Dendritic cell treated with granulocyte-macrophage colony-stimulating factor and Interleukin-4, amounts not matched to agents 40 ng/mL and 50 ng/mL, for 4 days (primary cell): ENCODE measurements at regions of chr13 and their contacts with region 1.

Region 1: DNA sequence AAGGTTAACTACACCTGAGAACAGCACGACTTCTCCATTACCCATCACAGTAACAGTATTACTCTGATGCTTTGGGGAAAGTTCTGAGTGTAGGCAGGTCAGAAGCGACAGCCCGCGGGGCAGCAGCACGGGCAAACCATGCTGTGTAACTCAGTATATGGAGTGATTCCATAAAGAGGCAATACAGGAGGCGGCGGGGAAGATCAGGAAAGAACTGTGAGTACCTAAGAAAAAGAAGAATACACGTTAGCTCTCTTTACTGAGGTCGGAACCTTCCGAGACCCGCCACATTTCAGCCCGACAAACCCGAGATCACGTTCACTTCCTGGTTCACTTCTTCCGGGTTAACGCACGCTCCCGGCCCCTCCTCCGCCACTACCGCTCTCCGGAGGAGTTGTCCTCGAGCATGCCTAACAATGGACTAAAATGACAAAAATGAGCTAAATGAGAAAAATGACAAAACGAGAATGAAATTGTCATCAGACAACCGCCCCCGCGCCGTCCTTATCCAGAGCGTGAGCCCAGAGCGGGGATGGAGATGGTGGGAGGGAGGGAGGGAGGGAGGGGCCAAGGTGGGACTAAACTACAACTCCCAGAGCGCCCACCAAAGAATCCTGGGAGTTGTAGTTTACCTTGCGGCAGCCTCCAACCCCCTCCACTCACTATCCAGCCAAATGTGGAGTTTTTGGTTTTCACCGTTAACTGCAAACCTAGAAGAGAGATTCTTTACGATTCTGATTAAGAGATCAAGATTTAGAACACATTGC is at the start of gene MTRF1:
- H3K4me3 Mint-ChIP-seq: peak within 1 kb of the TSS; percentile 99
- H3K27ac Mint-ChIP-seq: peak within 1 kb of the TSS; percentile 93
- H3K4me1 Mint-ChIP-seq: peaks cover 6% of the 10 kb centered on the region
- H3K27me3 Mint-ChIP-seq: no peaks in the 10 kb centered on the region

Region 2: DNA sequence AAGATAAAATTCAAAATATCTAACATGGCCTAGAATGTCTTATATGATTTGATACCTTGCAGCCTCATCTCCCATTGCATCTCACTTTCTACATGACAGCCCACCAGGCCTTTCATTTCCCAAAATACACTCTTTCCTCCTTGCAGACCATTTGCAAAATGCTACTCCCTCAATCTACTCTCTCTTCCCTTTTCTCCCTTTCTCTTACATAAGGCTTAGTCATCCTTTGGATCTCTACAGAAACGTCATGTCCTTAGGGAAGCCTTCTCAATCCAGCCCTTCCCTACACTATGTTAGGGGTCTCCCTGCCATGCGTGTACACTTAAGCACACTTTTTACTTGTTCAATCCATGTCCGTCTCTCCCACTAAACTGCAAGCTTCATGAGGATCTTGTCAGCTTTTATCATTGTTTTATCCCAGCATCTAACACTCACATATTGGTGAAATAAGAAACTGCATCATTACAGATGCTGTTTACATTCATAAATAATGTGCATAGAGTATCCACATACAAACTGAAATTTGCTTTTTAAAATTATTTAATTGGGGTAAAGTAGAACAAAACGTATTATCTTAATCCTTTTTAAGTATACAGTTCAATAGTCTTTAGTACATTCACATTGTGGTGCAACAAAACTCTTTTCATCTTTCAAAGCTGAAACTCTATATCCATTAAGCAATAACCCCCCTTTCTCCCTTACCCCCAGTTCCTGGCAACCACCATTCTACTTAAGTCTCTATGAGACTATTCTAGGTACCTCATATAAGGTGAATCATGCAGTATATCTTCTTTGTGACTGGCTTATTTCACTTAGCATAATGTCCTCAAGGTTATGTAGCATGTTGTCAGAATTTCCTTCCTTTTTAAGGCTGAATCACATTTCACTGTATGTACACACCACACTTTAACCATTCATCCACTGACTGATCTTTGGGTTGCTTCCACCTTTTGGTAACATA is 213.7 kb before region 1 on chr13:
- intact Hi-C with region 1: no loop called
- H3K4me3 Mint-ChIP-seq: no peak overlapping the region
- H3K27ac Mint-ChIP-seq: peak overlapping the region; percentile 36
- H3K4me1 Mint-ChIP-seq: peaks cover 63% of the 10 kb centered on the region
- H3K27me3 Mint-ChIP-seq: no peaks in the 10 kb centered on the region

Region 3: DNA sequence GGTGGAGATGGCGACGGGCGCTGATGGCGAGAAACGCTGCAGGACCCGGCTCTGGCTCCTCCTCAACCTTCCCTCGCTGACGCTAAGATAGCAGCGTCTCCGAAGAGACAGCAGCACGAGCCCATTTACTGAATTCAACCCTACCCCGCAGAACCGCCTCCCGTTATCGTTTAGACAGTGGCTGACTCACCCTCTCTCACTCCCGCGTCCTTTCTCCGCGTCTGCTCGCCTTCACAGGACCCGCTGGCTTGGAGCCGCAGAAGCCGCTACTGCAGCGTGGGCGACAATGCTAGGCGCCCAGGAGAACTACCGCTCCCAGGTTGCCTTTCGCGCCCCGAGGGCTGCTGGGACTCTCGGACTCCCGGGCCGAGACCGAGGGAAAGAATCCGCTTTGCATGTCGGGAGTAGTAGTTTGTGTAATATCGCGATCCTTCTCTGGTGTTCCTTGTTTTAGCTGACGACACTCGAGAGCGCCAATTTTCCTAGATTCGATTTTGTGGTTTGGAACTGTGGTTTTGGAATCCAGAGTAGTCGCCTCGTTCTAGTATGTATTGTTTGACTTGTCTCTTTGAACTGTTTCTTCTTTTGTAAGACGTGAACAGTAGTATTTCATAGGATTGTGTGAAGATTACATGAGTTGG is 130.8 kb before region 1 on chr13 and contains the start of gene KBTBD6:
- intact Hi-C with region 1: loop called (anchors 1 kb)
- H3K4me3 Mint-ChIP-seq: peak within 1 kb of the TSS; percentile 96
- H3K27ac Mint-ChIP-seq: peak within 1 kb of the TSS; percentile 85
- H3K4me1 Mint-ChIP-seq: peaks cover 30% of the 10 kb centered on the region
- H3K27me3 Mint-ChIP-seq: no peaks in the 10 kb centered on the region

Region 4: DNA sequence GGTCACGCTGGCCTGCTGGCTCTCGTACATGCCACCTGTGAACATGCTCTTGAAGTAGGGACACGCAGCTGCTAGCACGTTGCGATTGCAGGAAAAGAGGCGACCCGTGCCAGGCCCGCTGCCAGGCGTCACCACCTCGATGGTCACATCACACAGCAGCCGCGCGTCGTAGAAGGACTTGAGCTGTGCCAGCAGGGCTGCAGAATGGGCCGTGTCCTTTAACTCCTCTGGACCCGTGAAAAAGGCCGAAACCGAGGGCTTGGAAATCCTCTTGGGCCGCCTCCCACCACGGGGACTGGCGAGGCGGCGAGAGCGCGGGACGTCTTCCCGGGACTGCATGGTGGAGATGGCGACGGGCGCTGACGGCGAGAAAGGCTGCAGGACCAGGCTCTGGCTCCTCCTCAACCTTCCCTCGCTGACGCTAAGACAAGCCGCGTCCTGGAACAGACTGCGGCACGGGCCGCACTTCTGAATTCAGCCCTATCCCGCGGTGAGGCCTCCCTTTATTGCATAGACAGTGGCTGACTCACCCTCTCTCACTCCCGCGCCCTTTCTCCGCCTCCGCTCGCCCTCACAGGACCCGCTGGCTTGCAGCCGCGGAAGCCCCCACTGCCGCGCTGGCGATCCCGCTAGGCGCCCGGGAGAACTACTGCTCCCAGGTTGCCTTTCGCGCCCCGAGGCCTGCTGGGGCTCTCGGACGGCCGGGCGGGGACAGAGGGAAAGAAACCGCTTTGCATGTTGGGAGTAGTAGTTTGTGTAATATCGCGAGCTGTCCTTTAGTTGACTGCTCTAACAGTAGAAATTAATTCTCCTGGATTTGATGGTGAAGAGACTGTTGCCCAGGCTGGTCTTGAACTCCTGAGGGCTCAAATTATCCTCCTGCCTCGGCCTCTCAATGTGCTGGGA is 69.3 kb before region 1 on chr13 and contains the start of gene KBTBD7:
- intact Hi-C with region 1: loop called (anchors 1 kb)
- H3K4me3 Mint-ChIP-seq: peak within 1 kb of the TSS; percentile 91
- H3K27ac Mint-ChIP-seq: peak within 1 kb of the TSS; percentile 97
- H3K4me1 Mint-ChIP-seq: peaks cover 26% of the 10 kb centered on the region
- H3K27me3 Mint-ChIP-seq: no peaks in the 10 kb centered on the region

Region 5: DNA sequence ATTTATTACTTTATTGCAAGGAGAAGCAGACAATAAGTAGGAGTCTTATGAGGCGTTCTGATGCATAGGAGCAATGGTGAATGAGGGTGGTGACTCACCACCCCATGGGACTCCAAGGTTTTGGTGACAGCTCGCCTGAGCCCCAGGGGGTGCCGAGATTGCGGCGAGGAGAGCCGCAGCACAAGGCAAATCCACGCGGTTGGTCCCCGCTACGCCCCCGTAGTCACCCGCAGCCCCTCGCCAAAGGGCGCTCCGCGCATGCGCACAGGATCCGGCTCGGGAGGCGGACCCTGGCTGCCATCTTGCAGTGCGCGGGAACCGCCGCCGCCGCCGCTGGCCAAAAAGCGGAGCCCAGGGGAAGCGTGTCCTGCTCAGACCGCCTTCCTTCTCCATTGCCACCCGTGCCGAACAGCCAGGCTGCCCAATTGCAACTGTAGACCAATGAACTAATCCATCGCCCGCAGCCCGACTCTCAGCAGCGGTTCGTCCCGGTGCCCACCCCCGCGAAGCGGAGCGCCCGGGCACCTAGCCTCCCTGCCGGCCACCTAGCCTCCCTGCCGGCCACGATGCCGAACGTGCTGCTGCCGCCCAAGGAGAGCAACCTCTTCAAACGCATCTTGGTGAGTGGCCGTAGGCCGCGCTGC is 47.6 kb after region 1 on chr13 and contains the start of gene NAA16:
- intact Hi-C with region 1: loop called (anchors 1 kb)
- H3K4me3 Mint-ChIP-seq: peak within 1 kb of the TSS; percentile 92
- H3K27ac Mint-ChIP-seq: peak within 1 kb of the TSS; percentile 93
- H3K4me1 Mint-ChIP-seq: peaks cover 18% of the 10 kb centered on the region
- H3K27me3 Mint-ChIP-seq: no peaks in the 10 kb centered on the region

Region 6: DNA sequence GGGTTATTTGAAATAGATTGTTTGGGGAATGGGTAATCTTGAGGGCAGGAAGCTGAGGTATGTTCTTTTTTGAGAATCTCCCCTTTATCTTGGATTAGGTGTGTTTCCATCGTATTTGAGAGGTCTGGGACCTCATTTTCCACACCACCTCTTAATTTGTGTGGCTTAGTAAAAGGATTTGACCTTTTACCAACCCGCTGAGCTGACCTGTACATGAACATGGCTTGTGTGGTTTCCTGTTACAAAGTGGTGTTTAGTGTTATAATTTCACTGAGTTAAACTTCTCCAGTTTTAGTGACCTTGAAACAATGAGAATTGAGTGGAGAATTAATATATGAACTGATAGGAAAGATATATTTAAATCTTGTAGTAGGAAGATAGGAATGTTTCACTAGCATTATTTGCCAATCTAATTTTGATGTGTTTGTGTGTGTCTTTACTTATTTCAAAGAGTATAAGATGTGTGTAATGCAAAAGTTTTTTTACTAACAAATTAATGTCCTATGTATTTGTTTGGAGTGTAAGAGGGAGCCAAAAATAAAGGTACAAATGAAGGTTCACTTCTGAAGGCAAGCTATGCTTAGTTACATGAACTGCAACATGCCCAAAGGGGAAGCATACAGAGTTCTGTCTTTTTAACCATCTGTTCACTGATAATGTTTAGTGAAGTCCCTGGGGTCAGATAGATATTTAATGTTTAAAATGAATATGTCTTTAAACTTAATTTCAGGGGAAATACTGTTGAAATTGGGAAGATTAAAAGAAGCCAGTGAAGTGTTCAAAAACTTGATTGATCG is 64.7 kb after region 1 on chr13:
- intact Hi-C with region 1: loop called (anchors 5 kb)
- H3K4me3 Mint-ChIP-seq: no peak overlapping the region
- H3K27ac Mint-ChIP-seq: no peak overlapping the region
- H3K4me1 Mint-ChIP-seq: peaks cover 16% of the 10 kb centered on the region
- H3K27me3 Mint-ChIP-seq: no peaks in the 10 kb centered on the region

Region 7: GRCh38 chr13:41505297-41505741 is 241.9 kb after region 1 on chr13:
- intact Hi-C with region 1: no loop called
- H3K4me3 Mint-ChIP-seq: no peak overlapping the region
- H3K27ac Mint-ChIP-seq: no peak overlapping the region
- H3K4me1 Mint-ChIP-seq: peaks cover 20% of the 10 kb centered on the region
- H3K27me3 Mint-ChIP-seq: no peaks in the 10 kb centered on the region

Region 8: GRCh38 chr13:41613984-41614661 is 350.7 kb after region 1 on chr13:
- intact Hi-C with region 1: no loop called
- H3K4me3 Mint-ChIP-seq: no peak overlapping the region
- H3K27ac Mint-ChIP-seq: no peak overlapping the region
- H3K4me1 Mint-ChIP-seq: no peaks in the 10 kb centered on the region
- H3K27me3 Mint-ChIP-seq: no peaks in the 10 kb centered on the region

Region 9: DNA sequence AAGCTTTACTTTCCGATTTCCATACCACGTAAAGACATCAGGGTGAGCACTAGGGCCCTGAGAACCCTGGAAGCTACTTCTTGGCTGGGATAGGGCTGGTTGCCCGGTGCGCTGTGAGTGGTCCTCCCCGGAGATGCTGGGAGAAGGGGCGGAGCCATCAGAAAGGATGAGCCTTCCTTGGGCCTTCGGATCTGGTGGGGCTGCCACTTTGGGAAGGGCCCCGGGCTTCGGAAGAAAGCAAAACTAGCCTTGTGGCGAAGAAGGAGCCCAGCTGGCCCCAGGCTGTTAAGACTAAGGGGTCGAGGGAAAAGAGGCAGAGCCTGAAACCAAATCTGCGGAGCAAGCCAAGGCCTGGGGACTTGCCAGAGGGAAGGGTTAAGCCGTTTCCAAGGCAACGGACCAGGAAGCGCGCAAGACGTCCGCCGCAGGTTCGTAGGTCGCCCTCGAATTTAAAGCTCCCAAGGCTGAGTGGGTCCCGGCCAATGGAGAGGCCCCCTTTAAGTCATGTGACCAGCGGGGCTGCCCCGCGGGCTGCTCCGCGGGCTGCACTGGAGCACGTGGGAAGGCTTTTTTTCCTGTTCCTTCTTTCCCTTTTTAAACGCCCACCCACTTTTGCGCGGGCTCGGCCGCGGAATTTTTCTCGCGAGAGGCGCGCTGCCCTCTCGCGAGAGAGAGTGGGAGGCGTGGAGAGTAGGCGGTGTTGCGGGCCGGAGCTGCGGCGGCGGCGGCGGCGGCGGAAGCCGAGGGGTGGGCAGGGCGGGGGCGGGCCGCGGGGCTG is 1008.1 kb after region 1 on chr13:
- intact Hi-C with region 1: loop called (anchors 5 kb)
- H3K4me3 Mint-ChIP-seq: peak overlapping the region; percentile 93
- H3K27ac Mint-ChIP-seq: peak overlapping the region; percentile 95
- H3K4me1 Mint-ChIP-seq: peaks cover 48% of the 10 kb centered on the region
- H3K27me3 Mint-ChIP-seq: no peaks in the 10 kb centered on the region